Common myeloid progenitor, CD34-positive (primary cell): ENCODE measurements at regions of chr1 and their contacts with region 1.

Region 1: DNA sequence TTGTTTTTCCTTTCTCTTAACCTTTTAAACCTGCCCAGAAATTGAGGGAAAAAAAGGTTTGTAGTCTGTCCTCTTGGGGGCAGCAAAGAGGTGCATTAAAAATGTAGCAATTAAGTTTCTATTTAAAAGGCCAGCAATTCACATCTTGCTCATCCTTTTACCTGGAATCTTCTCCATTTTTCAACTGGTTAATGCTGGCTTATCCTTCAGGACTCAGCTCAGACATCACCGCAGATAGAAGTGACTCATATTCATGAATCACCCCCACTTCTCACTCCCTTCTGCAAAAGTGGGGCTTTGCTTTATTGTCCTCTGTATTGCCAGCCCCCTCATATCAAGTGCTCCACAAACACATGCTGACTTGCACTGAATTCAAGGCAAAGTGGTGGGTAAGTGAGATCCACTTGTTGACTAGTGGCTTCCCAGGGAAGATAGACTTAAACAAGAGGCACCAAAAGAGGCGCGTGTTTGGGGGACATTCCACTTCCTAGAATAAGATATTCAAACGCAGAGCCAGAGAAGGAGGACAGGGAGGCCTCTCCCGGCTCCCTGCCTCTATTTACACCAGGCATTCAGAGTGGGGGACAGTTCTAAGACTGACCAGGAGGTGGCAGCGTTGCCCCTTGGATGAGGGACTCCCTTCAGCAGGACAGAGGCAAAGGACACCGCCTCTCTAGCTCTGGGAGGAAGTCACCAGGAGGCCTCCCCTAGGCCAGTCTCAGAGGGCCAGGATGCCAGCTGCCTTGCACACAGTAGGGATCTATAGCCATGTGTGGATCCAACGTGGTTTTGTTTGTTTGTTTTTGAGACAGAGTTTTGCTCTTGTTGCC is 23.2 kb upstream of the ZNF648 start:
- DNase-seq: peak; percentile 78 to 89 (median 85)
- H3K4me3 ChIP-seq: peak overlapping the region in 3 of 7 experiments; percentile 29 to 49 (median 48)
- H3K27ac ChIP-seq: no peak overlapping the region
- H3K4me1 ChIP-seq: peaks cover 0 to 19% (median 16%) of the 10 kb centered on the region in 4 experiments
- H3K27me3 ChIP-seq: no peaks in the 10 kb centered on the region

Region 2: DNA sequence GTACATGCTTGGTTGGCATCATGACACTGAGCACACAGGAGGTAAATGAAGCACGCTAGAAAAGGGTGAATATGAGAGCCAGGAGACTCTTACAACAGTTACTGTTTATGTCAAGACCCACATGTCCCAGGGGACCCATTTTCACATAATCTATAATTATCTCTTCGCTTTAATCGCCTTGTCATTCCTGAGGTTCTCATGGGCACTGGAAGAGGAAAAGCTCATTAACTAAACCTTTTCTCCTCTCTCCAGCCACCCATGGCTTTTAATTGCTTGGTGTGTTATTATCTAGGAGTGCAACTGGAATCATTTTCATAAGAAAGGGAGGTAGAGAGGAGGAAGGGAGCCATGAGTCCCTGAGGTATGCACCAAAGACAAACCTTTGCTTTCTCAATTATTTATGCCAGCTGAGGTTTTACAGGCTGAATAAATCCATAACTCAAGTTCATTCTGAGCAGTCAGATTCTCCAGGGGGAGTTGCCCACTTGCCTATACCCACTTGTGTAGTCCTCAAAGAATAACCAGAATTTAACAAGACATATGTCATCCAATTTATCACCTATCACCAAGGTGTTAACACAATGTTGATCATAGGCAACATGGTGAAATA is 1659.7 kb before region 1 on chr1:
- CTCF ChIA-PET with region 1: no interaction called
- POLR2A ChIA-PET with region 1: no interaction called
- DNase-seq: no peak
- H3K4me3 ChIP-seq: no peak overlapping the region
- H3K27ac ChIP-seq: no peak overlapping the region
- H3K4me1 ChIP-seq: no peaks in the 10 kb centered on the region
- H3K27me3 ChIP-seq: no peaks in the 10 kb centered on the region

Region 3: DNA sequence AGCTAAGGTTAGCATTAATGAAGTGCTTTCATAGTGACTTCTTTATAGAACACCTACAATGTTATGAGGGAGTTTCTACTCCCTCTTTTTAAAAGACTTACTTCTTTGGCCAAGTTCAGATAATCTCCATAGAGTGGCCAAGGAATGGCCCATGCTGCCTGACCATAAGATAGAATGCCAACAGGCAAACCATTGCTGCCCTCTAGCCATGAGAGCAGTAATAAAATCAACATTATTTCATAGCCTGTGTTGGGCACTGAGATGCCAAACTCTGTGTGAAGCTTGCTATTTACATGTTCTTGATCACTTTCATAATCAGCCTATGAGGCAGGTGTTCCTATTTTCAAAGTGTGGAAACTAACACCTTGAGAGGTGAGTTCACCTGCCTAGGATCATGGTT is 155.3 kb before region 1 on chr1:
- CTCF ChIA-PET with region 1: no interaction called
- POLR2A ChIA-PET with region 1: no interaction called
- DNase-seq: no peak
- H3K4me3 ChIP-seq: no peak overlapping the region
- H3K27ac ChIP-seq: no peak overlapping the region
- H3K4me1 ChIP-seq: no peaks in the 10 kb centered on the region
- H3K27me3 ChIP-seq: peaks cover 0 to 2% (median 0%) of the 10 kb centered on the region in 5 experiments

Region 4: GRCh38 chr1:182069028-182069466 is 15.7 kb before region 1 on chr1:
- CTCF ChIA-PET with region 1: interaction called, 29 read pairs
- POLR2A ChIA-PET with region 1: interaction called, 3 read pairs
- DNase-seq: peak; percentile 14 to 51 (median 49)
- H3K4me3 ChIP-seq: no peak overlapping the region
- H3K27ac ChIP-seq: no peak overlapping the region
- H3K4me1 ChIP-seq: peaks cover 0 to 3% (median 0%) of the 10 kb centered on the region in 4 experiments
- H3K27me3 ChIP-seq: peaks cover 2 to 15% (median 7%) of the 10 kb centered on the region in 5 experiments